H1 (cell line): ENCODE measurements at regions of chr5 and their contacts with region 1.

Region 1: DNA sequence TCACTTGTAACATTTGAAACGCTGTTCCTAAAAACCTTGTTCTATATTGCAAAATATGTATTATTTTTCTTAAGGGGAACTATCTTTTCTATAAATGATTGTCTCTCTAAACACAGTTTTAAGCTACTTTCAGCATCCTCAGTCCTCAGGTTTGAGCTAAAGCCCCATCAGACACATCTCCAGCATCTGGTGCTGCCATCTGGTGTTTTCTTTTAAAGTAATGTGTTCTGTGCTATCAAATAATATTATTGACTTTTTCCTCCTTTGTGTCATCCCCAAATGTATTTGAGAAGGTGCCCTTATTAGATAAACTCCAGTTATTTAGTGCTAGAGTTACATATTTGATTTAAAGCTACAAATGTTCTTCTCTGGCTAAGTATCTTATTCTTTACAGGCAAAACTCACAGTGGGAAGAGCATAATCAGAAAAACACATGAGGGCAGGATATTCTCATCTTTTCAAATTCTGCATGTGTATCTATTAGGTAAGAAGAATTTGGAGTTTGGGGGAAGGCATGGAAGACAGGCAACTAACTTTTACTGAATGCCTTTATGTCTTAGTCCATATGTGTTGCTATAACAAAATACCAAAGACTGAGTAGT is 27.5 kb downstream of the ZNF474 start:
- DNase-seq: no peak
- H3K4me3 ChIP-seq: no peak overlapping the region
- H3K27ac ChIP-seq: no peak overlapping the region
- H3K4me1 ChIP-seq: no peaks in the 10 kb centered on the region
- H3K27me3 ChIP-seq: no peaks in the 10 kb centered on the region
- CTCF ChIP-seq: peak in 2 of 3 experiments; percentile 36 to 42; a peak in 2 of 4 replicates
- EP300 ChIP-seq: no peak
- POLR2A ChIP-seq: no peak
- RAD21 ChIP-seq: peak; percentile 68 to 73

Region 2: GRCh38 chr5:122050959-122051358 is 105.9 kb before region 1 on chr5:
- CTCF ChIA-PET with region 1: no interaction called
- POLR2A ChIA-PET with region 1: no interaction called
- DNase-seq: no peak
- H3K4me3 ChIP-seq: no peak overlapping the region
- H3K27ac ChIP-seq: no peak overlapping the region
- H3K4me1 ChIP-seq: no peaks in the 10 kb centered on the region
- H3K27me3 ChIP-seq: peaks cover 0 to 1% (median 0%) of the 10 kb centered on the region in 4 experiments; a peak in 1 of 7 replicates
- CTCF ChIP-seq: no peak
- EP300 ChIP-seq: no peak
- POLR2A ChIP-seq: no peak
- RAD21 ChIP-seq: no peak

Region 3: GRCh38 chr5:122076664-122077365 is 80.0 kb before region 1 on chr5:
- CTCF ChIA-PET with region 1: interaction called, 12 read pairs
- POLR2A ChIA-PET with region 1: no interaction called
- DNase-seq: peak in 1 of 2 experiments; percentile 97
- H3K4me3 ChIP-seq: peak overlapping the region; percentile 43 to 79 (median 65)
- H3K27ac ChIP-seq: no peak overlapping the region
- H3K4me1 ChIP-seq: peaks cover 0 to 9% (median 3%) of the 10 kb centered on the region in 4 experiments; a peak in 5 of 7 replicates
- H3K27me3 ChIP-seq: peaks cover 2 to 29% (median 22%) of the 10 kb centered on the region in 4 experiments
- CTCF ChIP-seq: peak; percentile 70 to 93 (median 92)
- EP300 ChIP-seq: no peak
- POLR2A ChIP-seq: no peak
- RAD21 ChIP-seq: peak; percentile 75 to 82

Region 4: GRCh38 chr5:122091936-122092600 is 64.8 kb before region 1 on chr5:
- CTCF ChIA-PET with region 1: interaction called, 78 read pairs
- POLR2A ChIA-PET with region 1: no interaction called
- DNase-seq: no peak
- H3K4me3 ChIP-seq: no peak overlapping the region
- H3K27ac ChIP-seq: no peak overlapping the region
- H3K4me1 ChIP-seq: no peaks in the 10 kb centered on the region
- H3K27me3 ChIP-seq: no peaks in the 10 kb centered on the region
- CTCF ChIP-seq: peak in 2 of 3 experiments; percentile 51 to 53; a peak in 2 of 4 replicates
- EP300 ChIP-seq: no peak
- POLR2A ChIP-seq: no peak
- RAD21 ChIP-seq: peak; percentile 69 to 74

Region 5: GRCh38 chr5:122126177-122126755 is 30.6 kb before region 1 on chr5:
- CTCF ChIA-PET with region 1: interaction called, 14 read pairs
- POLR2A ChIA-PET with region 1: no interaction called
- DNase-seq: no peak
- H3K4me3 ChIP-seq: no peak overlapping the region
- H3K27ac ChIP-seq: no peak overlapping the region
- H3K4me1 ChIP-seq: peaks cover 2 to 6% (median 3%) of the 10 kb centered on the region in 4 experiments; a peak in 3 of 7 replicates
- H3K27me3 ChIP-seq: no peaks in the 10 kb centered on the region
- CTCF ChIP-seq: no peak
- EP300 ChIP-seq: no peak
- POLR2A ChIP-seq: no peak
- RAD21 ChIP-seq: no peak

Region 6: DNA sequence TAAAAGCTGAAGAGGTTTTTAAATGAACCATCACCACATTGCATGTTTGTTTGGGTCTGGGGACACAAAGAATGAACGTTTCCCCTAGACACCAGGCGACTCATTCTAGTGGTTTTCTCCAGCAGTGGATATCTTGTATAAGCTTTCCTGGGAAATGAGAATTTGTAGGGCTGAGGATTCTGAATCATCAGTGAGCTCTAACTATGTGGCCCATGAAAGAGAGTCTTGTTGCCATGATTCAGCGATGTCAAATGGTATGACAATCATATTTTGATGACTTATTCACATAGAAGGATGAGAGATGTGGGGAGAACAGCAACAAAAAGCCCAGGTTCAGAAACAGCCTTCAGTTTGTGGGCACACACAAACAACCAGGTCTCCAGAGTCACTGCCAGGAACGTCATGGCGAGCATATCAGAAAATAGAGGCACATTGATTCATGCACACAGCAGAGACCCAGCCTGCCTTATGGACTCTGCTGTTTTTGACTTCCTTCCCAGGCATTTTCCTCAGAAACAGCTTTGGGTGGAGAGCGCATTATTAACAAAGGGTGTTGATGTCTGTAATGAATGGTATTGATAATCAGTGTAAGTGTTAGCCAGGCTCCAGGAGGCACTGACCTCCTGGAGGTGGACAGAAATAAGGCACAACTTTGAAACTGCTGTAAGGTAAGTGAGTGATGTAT is 14.2 kb before region 1 on chr5:
- CTCF ChIA-PET with region 1: interaction called, 65 read pairs
- POLR2A ChIA-PET with region 1: no interaction called
- DNase-seq: no peak
- H3K4me3 ChIP-seq: no peak overlapping the region
- H3K27ac ChIP-seq: no peak overlapping the region
- H3K4me1 ChIP-seq: no peaks in the 10 kb centered on the region
- H3K27me3 ChIP-seq: no peaks in the 10 kb centered on the region
- CTCF ChIP-seq: no peak
- EP300 ChIP-seq: no peak
- POLR2A ChIP-seq: no peak
- RAD21 ChIP-seq: no peak

Region 7: GRCh38 chr5:122170620-122171019 is 13.8 kb after region 1 on chr5:
- CTCF ChIA-PET with region 1: interaction called, 12 read pairs
- POLR2A ChIA-PET with region 1: no interaction called
- DNase-seq: no peak
- H3K4me3 ChIP-seq: no peak overlapping the region
- H3K27ac ChIP-seq: no peak overlapping the region
- H3K4me1 ChIP-seq: peaks cover 2 to 5% (median 4%) of the 10 kb centered on the region in 4 experiments; a peak in 3 of 7 replicates
- H3K27me3 ChIP-seq: no peaks in the 10 kb centered on the region
- CTCF ChIP-seq: no peak
- EP300 ChIP-seq: no peak
- POLR2A ChIP-seq: no peak
- RAD21 ChIP-seq: no peak